HEK293T (cell line): ENCODE measurements at regions of chr12 and their contacts with region 1.

Region 1: GRCh38 chr12:51976376-51977160 is 25.1 kb downstream of the ACVR1B start:
- DNase-seq: no peak

Region 2: DNA sequence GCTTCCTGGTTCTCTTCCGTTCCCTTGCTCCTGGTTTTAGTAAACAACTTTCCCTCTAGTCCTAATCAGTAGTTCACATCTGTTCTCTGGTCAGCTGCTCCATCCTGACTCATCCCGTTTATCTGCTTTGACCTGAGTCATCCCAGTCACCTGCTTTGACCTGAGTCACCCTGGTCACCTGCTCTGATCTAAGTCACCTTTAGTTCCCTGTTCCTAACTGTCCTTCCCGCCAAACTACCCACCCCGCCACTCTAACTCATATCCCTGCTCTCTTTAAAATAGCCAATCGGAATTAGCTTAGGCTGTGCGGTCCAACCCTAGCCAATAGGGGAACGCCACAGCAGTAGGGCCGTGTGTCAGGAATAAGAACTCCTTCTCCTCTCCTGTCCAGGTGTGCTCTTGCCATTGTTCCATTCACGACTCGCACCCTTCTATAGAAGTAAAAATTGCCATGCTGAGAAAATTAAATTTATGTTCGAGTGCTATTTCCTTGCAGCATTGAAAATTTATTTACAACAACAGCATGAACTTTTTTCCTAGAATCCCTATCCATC is 91.8 kb before region 1 on chr12:
- CTCF ChIA-PET with region 1: no interaction called
- POLR2A ChIA-PET with region 1: no interaction called
- DNase-seq: no peak

Region 3: GRCh38 chr12:51941011-51941581 is 35.5 kb before region 1 on chr12:
- CTCF ChIA-PET with region 1: no interaction called
- POLR2A ChIA-PET with region 1: no interaction called
- DNase-seq: no peak

Region 4: GRCh38 chr12:51994959-51995358 is 18.4 kb after region 1 on chr12:
- CTCF ChIA-PET with region 1: interaction called, 11 read pairs
- POLR2A ChIA-PET with region 1: no interaction called
- DNase-seq: no peak

Region 5: GRCh38 chr12:52121824-52122539 is 145.4 kb after region 1 on chr12:
- CTCF ChIA-PET with region 1: no interaction called
- POLR2A ChIA-PET with region 1: no interaction called
- DNase-seq: peak; percentile 80